ENCODE measurements at regions of chr5 and their contacts with region 1.

Region 1: GRCh38 chr5:52799983-52800393 is 12.3 kb downstream of the ITGA1 start:
- DNase-seq: peak; percentile 95
- H3K4me3 Mint-ChIP-seq: peak overlapping the region; percentile 90
- H3K27ac Mint-ChIP-seq: peak overlapping the region; percentile 88
- H3K4me1 Mint-ChIP-seq: peaks cover 58% of the 10 kb centered on the region
- H3K27me3 Mint-ChIP-seq: peaks cover 3% of the 10 kb centered on the region

Region 2: DNA sequence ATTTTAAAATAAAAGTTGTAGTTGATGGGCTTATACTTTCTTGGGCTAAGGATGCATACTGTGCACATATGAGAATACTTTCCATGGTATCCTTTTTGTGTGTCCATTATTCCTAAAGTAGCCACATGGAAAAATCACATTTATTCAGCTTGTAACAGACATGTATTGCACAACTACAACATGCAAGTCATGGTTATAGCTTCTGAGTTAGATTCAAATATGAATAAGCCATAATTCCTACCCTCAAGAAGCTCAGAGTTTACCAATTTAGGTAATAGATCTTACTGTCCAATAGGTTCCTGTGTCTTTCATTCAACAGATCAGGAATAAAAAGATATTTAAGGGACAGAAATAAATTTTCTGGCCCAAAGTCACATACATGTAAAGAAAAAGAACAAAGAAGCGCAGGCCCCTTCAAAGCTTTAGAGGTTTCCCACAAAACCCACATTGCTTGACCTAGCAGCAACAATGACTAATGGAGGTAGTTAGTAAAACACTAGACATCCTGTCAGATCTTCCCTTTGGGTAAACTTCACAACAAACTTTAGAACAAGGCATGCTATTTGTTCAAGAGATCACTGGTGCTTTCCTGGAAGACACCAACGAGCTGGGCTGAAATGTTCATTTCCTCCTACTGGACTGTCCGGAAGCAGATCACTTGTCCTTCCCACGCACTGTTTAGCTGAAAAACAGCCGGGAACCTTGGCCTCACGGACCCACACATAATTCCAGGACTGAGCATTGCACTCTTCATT is 90.6 kb before region 1 on chr5:
- intact Hi-C with region 1: loop called (anchors 1 kb)
- DNase-seq: peak; percentile 17
- H3K4me3 Mint-ChIP-seq: peak overlapping the region; percentile 28
- H3K27ac Mint-ChIP-seq: peak overlapping the region; percentile 59
- H3K4me1 Mint-ChIP-seq: peaks cover 74% of the 10 kb centered on the region
- H3K27me3 Mint-ChIP-seq: no peaks in the 10 kb centered on the region

Region 3: DNA sequence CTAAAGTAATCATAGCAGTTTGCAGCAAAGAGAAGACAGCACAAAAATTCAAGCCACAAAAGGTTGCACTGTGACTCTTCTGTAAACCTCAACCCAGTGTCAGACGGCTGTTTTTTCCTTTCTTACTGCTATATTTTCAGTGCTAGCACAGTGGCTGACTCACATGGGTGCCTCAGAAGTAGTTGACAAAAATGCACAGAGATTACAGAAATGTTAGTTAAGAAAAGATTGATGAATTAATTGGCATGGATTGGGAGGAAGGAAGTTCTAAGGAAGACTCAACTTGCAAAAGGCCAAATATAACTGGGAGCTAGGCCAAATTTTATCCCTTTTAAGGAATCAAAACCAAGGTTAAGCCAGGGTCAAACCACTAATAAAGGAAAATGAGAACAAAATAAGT is 56.0 kb before region 1 on chr5:
- intact Hi-C with region 1: loop called (anchors 1 kb)
- DNase-seq: peak; percentile 66
- H3K4me3 Mint-ChIP-seq: peak overlapping the region; percentile 49
- H3K27ac Mint-ChIP-seq: peak overlapping the region; percentile 78
- H3K4me1 Mint-ChIP-seq: peaks cover 80% of the 10 kb centered on the region
- H3K27me3 Mint-ChIP-seq: no peaks in the 10 kb centered on the region

Region 4: DNA sequence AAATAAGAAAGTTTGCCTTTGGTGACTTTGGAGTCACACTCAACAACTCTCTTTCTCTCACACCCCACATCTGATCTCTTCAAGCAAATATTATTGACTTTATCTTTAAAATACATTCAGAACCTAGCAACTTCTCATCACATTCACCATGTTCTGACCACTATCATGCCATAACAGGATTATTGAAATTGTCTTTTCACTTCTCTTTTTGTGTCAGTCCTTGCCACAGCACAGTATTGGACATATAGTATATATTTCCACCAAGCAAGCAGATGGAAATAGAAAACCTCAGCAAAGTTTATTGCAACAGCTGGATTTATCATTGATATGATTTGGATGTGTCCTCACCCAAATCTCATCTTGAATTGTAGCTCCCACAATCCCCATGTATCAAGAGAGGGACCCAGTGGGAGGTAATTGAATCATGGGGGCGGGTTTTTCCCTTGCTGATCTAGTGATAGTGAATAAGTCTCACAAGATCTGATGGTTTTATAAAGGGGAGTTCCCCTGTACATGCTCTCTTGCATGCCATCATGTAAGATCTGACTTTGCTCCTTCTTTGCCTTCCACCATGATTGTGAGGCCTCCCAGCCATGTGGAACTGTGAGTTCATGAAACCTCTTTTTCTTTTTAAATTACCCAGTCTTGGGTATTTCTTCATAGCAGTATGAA is 39.2 kb before region 1 on chr5:
- intact Hi-C with region 1: no loop called
- DNase-seq: no peak
- H3K4me3 Mint-ChIP-seq: no peak overlapping the region
- H3K27ac Mint-ChIP-seq: no peak overlapping the region
- H3K4me1 Mint-ChIP-seq: peaks cover 15% of the 10 kb centered on the region
- H3K27me3 Mint-ChIP-seq: no peaks in the 10 kb centered on the region

Region 5: GRCh38 chr5:52787600-52788504 is 12.1 kb before region 1 on chr5 and contains the starts of genes ITGA1 and PELO:
- intact Hi-C with region 1: loop called (anchors 1 kb)
- DNase-seq: peak; percentile 32
- H3K4me3 Mint-ChIP-seq: peak within 1 kb of the TSS; percentile 91
- H3K27ac Mint-ChIP-seq: peak within 1 kb of the TSS; percentile 32
- H3K4me1 Mint-ChIP-seq: peaks cover 33% of the 10 kb centered on the region
- H3K27me3 Mint-ChIP-seq: peaks cover 15% of the 10 kb centered on the region
- total RNA-seq, gene ITGA1: 2.2 and 2.5 TPM in 2 replicates
- total RNA-seq, gene PELO: 19.4 and 20.0 TPM in 2 replicates

Region 6: GRCh38 chr5:53109443-53110127 is 309.6 kb after region 1 on chr5 and contains the start of gene MOCS2:
- intact Hi-C with region 1: loop called (anchors 1 kb)
- DNase-seq: peak; percentile 86
- H3K4me3 Mint-ChIP-seq: peak within 1 kb of the TSS; percentile 91
- H3K27ac Mint-ChIP-seq: peak within 1 kb of the TSS; percentile 84
- H3K4me1 Mint-ChIP-seq: peaks cover 31% of the 10 kb centered on the region
- H3K27me3 Mint-ChIP-seq: no peaks in the 10 kb centered on the region
- total RNA-seq, gene MOCS2: 17.9 and 18.4 TPM in 2 replicates

Measured in activated T-helper 1 cell treated with anti-CD3 and anti-CD28 coated beads, Interleukin-12 subunit alpha, Interleukin-12 subunit beta, Interleukin-2, Interleukin-4 antibody, amounts not matched to agents 30 ng/mL and 10 ng/mL and 1 ng/mL, durations not matched to agents 14 hours and 24 hours and 36 hours (primary cell).